Common myeloid progenitor, CD34-positive (primary cell): ENCODE measurements at regions of chrX and their contacts with region 1.

Region 1: GRCh38 chrX:23694606-23695005 is 27.3 kb downstream of the PRDX4 start:
- DNase-seq: peak; percentile 31 to 63 (median 54)
- H3K4me3 ChIP-seq: no peak overlapping the region
- H3K27ac ChIP-seq: no peak overlapping the region
- H3K4me1 ChIP-seq: peaks cover 0 to 3% (median under 1%) of the 10 kb centered on the region in 4 experiments
- H3K27me3 ChIP-seq: peaks cover 0 to 4% (median 0%) of the 10 kb centered on the region in 5 experiments

Region 2: DNA sequence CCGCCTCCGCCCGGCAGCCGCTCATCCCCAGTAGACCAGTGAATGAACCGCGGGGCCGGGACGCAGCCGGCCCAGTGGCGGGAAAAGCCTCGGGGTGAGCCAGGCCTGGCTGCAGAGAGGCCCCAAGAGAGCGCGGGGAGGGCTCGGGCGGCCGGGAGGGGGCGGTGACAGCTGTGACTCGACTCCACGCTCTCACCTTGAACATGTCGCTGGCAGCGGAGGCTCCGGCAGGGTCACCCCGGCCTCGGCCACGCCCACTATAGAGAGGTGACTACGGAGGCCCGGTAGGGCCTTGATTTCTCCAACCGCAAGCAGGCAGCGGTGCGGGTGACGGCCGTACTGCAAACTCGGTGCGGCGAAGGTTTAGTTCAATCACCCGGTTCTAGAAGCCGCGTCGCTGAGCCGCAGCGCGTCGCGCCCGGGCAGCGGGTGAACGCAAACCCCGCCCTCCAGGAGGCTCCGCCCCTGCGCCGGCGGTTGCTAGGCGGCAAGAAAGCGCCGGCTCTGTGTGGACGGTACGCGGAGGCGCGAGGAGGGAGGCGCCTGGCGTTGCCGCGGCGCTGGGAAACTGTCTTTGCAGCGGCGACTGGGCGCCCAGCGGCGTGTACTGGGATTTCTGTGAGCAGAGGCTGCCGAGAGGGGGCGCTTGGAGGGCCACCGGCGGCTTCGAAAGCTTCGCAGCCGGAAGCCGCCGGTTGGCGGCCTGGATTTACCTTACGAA is 213.1 kb after region 1 on chrX and contains the starts of genes APOO and CXorf58:
- CTCF ChIA-PET with region 1: interaction called, 112 read pairs
- POLR2A ChIA-PET with region 1: no interaction called
- DNase-seq: peak; percentile 90 to 95 (median 95)
- H3K4me3 ChIP-seq: peak within 1 kb of the TSS; percentile 13 to 81 (median 63)
- H3K27ac ChIP-seq: peak within 1 kb of the TSS; percentile 40 to 84
- H3K4me1 ChIP-seq: peaks cover 0 to 12% (median 5%) of the 10 kb centered on the region in 4 experiments
- H3K27me3 ChIP-seq: peaks cover 0 to 13% (median 0%) of the 10 kb centered on the region in 5 experiments